ENCODE measurements at regions of chrX and their contacts with region 1.

Region 1: GRCh38 chrX:41734530-41734929 is 10.5 kb downstream of the GPR82 start:
- DNase-seq: peak; percentile 56
- H3K4me3 ChIP-seq: peak overlapping the region; percentile 56
- H3K27ac ChIP-seq: peak overlapping the region; percentile 99
- H3K4me1 ChIP-seq: peaks cover 68% of the 10 kb centered on the region
- CTCF ChIP-seq: peak; percentile 75

Region 2: DNA sequence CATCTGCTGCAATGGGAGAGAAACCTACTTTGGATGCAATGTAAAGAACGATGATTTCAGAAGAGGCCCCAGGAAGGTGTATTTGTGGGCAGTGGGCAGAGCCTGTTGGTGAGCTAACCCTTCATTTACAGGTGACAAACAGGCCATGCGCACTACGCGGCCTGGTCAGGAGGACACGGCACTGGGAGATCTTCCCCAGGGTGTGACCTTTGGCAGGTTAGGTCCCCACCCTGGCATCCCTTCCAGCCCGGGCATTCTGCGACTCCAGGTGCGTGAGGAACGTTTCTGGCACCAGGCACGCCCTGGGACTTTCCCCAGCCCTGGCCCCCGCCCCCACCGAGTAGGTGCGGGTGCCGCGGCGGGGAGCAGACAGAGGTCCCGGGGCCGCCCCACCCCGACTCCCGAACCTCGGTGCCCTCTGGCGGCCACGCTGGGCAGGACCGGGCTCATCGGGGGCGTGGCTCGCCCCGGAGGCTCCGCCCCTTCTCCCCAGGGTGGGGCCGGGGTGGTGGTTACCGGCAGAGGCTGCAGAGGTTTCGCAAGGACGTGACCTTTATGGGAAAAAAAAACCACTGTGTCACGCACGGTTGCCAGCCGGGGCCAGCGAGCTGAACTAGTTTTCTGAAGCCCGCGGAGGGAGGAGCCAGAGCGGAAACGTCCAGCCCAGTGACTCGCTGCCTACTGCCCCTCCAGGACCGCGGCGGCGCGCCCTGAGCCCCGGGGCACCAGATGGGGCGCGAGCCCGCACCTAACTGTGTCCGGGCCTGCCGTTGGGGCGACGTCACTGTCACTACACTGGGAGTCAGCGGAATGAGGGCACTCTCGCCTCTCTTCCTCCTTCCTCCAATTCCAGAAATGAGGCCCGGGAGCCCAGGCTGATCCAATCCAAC is 292.4 kb before region 1 on chrX:
- CTCF ChIA-PET with region 1: no interaction called
- POLR2A ChIA-PET with region 1: no interaction called
- intact Hi-C with region 1: loop called (anchors 2 kb)
- DNase-seq: peak; percentile 88
- H3K4me3 ChIP-seq: peak overlapping the region; percentile 70
- H3K27ac ChIP-seq: peak overlapping the region; percentile 85
- H3K4me1 ChIP-seq: peaks cover 53% of the 10 kb centered on the region
- CTCF ChIP-seq: peak; percentile 71

Region 3: DNA sequence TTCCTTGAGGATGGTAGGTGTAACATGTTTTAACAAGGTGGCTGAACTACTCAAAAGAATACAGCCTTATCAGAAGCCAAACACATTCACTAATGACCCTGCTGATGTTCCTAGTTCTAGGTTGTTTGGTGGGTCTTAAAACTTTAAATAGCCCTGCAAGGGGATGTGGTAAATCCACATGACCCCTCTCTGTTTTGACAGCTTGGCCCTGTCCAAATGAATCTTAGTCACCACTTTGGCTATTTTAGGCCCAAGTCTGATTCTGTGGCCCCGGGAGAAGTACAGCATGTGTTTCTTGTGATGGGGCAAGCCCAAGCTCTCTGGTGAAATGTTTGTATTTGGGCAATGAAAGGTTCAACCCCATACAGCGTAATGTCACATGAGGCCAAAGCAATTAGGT is 100.2 kb before region 1 on chrX:
- CTCF ChIA-PET with region 1: no interaction called
- POLR2A ChIA-PET with region 1: no interaction called
- intact Hi-C with region 1: no loop called
- DNase-seq: no peak
- H3K4me3 ChIP-seq: no peak overlapping the region
- H3K27ac ChIP-seq: no peak overlapping the region
- H3K4me1 ChIP-seq: no peaks in the 10 kb centered on the region
- CTCF ChIP-seq: no peak

Region 4: DNA sequence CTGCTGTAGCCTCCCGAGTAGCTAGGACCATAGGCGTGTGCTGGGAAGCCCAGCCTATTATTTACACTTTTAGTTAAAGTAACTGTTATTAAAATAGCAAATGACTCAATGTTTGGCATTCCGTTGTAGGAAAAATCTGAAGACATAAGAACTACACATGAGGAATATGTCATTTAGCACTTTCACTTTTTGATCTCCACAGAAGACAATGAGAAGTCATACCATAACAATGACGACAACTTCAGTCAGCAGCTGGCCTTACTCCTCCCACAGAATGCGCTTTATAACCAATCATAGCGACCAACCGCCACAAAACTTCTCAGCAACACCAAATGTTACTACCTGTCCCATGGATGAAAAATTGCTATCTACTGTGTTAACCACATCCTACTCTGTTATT is 39.1 kb before region 1 on chrX:
- CTCF ChIA-PET with region 1: no interaction called
- POLR2A ChIA-PET with region 1: no interaction called
- intact Hi-C with region 1: no loop called
- DNase-seq: no peak
- H3K4me3 ChIP-seq: no peak overlapping the region
- H3K27ac ChIP-seq: no peak overlapping the region
- H3K4me1 ChIP-seq: peaks cover 6% of the 10 kb centered on the region
- CTCF ChIP-seq: no peak

Measured in OCI-LY7 (cell line).